ENCODE measurements at regions of chr3 and their contacts with region 1.

Region 1: DNA sequence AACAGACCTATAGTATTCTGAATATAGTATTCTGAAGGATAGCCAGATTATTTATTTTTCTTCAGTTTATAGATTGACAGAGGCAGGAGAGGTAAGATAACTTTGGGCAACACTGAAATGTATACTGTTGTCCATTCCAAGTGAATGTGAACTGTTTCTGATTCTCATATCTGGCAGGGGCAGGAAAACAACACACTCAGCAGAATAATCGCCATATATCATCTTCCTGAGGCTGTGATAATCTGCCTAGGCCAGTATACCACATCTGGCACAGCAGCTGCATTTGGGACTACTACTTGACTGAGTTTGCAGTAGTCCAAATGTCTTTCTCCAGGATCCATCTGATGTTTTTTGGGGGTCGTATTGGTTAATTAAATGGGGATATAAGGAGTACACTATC is 22.4 kb upstream of the SETD2 start:
- DNase-seq: no peak
- H3K4me3 ChIP-seq: no peak overlapping the region
- H3K27ac ChIP-seq: no peak overlapping the region
- H3K4me1 ChIP-seq: no peaks in the 10 kb centered on the region
- H3K27me3 ChIP-seq: no peaks in the 10 kb centered on the region
- CTCF ChIP-seq: no peak
- POLR2A ChIP-seq: no peak

Region 2: DNA sequence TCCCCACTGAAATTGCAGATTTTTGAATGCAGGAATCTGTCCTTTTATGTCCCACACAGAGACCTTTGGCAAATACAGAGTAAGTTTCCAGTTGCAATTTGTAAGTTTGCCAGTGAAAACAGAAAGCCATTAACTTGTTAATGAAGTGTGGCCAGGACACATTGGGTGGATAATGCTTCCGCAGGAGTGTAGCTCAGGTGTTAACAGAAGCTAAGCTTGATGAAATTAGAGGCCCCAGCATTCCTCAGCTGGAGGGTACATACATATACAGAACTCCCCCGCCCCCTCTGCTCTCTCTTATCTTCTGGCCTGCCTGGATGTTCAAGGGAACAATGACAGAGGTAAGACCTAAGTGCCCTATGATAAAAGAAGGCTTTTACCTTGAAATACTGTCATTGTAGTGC is 612.0 kb before region 1 on chr3:
- intact Hi-C with region 1: loop called (anchors 5 kb)
- DNase-seq: no peak
- H3K4me3 ChIP-seq: no peak overlapping the region
- H3K27ac ChIP-seq: no peak overlapping the region
- H3K4me1 ChIP-seq: no peaks in the 10 kb centered on the region
- H3K27me3 ChIP-seq: no peaks in the 10 kb centered on the region
- CTCF ChIP-seq: no peak
- POLR2A ChIP-seq: no peak

Region 3: DNA sequence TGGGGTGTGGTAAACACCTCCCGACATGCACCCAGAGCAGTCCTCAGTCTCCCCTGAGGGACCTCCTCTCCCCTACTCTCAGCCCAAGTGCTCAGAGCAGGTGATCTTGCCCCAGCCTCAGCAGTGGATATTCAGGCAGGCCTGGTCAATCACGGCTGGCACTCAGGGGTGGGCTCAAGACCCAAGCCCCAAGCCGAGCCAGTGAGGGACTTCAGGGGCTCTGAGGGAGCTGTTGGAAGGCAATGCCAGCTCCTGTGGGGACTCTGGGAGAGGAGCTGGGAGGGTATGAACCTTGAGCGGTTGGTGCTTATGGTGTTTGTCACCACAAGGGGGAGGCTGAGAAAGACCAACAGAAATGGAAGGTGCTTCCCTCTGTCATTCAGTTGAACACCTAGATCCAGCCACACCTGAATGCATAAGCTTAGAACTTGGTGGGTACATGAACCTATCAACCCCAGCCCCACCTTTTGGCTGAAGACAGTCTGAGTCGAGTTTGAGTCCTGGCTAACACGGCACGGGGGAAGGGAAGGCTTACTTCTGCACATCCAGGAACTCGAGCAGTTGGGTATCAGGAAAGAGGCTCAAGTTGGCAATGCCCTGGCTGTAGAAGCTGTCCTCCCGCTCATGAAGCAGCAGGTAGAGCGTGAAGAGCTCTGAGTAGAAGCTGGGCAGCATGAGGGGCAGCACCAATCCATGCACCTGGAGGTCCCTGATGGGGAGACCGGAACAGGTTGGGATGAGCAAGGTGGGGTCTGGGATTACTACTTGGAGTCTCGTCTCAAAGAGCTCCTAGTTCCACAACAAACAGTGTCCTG is 512.0 kb before region 1 on chr3:
- intact Hi-C with region 1: no loop called
- DNase-seq: no peak
- H3K4me3 ChIP-seq: no peak overlapping the region
- H3K27ac ChIP-seq: no peak overlapping the region
- H3K4me1 ChIP-seq: no peaks in the 10 kb centered on the region
- H3K27me3 ChIP-seq: no peaks in the 10 kb centered on the region
- CTCF ChIP-seq: no peak
- POLR2A ChIP-seq: no peak